OCI-LY7 (cell line): ENCODE measurements at regions of chr9 and their contacts with region 1.

Region 1: DNA sequence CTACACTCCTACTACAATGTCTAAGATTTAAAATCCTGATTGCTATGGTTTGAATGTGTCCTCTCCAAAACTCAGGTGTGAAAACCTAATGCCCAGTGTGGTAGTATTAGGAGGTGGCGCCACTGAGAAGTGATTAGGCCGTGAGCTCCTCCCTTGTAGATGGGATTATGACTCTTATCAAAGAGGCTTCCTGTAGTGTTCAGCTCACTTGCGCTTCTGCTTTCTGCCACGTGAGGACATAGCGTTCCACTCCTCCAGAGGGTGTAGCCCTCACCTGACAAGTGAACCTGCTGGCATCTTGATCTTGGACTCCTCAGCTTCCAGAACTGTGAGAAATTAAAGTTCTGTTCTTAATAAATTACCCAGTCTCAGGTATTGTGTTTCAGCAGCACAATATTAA is 33.0 kb upstream of the WHRN start:
- DNase-seq: peak; percentile 84
- H3K4me3 ChIP-seq: no peak overlapping the region
- H3K27ac ChIP-seq: no peak overlapping the region
- H3K4me1 ChIP-seq: peaks cover 26% of the 10 kb centered on the region
- CTCF ChIP-seq: peak; percentile 84

Region 2: DNA sequence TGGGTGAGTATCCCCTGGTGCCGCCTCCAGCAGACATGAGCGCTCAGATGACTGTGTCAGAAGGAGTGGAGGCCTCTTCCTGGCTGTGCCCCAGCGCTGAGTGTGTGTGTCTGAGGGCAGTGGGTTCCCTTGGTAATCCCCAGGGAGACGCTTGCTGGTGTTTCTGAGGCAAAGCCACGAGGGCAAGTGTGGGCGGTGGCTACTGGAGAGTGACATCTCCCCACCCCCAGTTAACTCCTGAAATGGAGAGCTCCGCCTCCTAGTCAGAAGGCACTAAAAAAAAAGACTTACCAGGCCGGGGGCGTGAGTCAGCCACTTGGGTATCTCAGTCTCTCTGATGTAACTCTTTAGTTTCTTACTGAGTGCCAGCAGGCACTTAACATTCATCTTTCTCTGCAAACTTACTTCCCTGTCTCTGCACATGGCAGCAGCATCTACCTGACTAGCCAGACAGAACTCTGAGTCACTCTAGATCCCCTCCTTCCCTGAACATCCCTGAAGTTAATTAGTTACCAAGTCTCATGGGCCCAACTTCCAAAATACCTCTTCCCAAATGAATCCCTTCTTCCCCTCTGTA is 189.2 kb before region 1 on chr9:
- CTCF ChIA-PET with region 1: no interaction called
- POLR2A ChIA-PET with region 1: no interaction called
- intact Hi-C with region 1: no loop called
- DNase-seq: peak; percentile 83
- H3K4me3 ChIP-seq: no peak overlapping the region
- H3K27ac ChIP-seq: peak overlapping the region; percentile 60
- H3K4me1 ChIP-seq: peaks cover 25% of the 10 kb centered on the region
- CTCF ChIP-seq: no peak

Region 3: GRCh38 chr9:114616653-114617520 is 78.6 kb after region 1 on chr9:
- CTCF ChIA-PET with region 1: interaction called, 3 read pairs
- POLR2A ChIA-PET with region 1: interaction called, 3 read pairs
- intact Hi-C with region 1: loop called (anchors 2 kb)
- DNase-seq: peak; percentile 86
- H3K4me3 ChIP-seq: peak overlapping the region; percentile 33
- H3K27ac ChIP-seq: peak overlapping the region; percentile 91
- H3K4me1 ChIP-seq: peaks cover 54% of the 10 kb centered on the region
- CTCF ChIP-seq: no peak